Head of caudate nucleus (tissue), 42 donors: ENCODE measurements at regions of chr3 and their contacts with region 1.

Region 1: DNA sequence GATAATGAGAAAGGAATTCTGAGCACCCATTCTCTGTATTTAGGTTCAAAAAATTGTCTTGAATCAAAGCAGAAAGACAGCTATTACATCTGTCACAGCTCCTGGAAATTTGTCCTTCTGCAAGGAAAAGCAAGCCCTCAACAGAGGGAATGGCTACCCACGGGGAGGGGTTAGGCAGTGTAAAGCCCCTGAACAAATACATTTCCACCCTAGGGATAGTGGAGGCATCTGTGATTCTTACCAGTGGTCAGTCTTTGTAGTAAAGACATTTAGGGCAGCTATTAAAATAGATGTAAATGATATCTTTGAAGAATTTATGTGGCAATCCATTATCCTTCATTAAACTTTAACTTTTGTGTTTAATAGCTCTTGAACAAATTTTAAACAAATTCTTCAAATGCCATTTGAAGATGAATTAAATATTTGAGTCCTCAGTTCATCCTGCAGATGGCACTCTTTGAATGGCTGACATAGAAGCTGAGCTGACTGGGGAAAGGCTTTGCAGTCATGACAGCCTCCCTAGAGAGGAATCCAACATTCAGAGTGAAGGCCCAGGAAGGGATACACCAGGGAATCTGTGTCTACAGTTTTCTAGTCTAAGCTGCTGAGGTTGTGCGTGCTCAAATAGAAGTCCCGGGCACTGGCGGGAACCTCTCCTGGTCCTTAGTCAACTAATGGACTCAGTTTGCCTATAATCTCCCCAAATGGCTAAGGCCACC is 359.7 kb upstream of the ROPN1 start:
- DNase-seq: peak in 31 of 42 donors; percentile 8 to 79 (median 51)

Region 2: DNA sequence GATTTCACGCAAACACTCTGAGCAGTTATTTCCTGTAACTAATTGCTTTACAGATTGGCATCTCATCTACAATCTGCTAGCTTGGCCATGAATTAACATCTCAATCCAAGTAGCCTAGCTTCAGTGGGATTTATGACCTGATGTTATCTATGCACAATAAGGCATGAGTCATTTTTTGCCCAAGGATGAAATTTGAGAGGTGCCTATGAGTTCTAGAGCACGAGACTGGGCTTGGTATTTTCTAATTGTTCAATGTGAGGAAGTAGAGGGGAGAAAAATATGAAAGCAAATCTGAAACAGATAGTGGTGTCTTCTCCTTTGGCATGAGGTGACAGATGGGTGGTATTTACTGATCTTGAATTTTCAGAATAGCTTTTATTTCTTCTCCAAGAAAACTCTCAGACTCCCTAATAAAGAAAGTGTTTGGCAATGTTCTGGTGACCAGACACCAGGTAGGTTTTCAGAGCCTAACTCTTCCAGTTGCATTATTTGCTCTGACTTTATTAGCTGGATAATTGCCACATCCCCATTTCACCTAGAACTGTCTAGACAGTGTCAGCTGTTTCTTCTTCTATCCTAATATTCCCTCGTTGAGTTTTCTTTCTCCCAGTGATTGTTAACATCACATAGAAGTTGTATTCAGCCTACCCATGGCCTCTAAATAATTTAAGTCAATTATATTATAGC is 77.7 kb after region 1 on chr3:
- intact Hi-C with region 1: no loop called
- DNase-seq: no peak

Region 3: GRCh38 chr3:124467980-124468902 is 116.7 kb after region 1 on chr3:
- intact Hi-C with region 1: loop called (anchors 5 kb)
- DNase-seq: peak; percentile 23 to 83 (median 58)

Region 4: DNA sequence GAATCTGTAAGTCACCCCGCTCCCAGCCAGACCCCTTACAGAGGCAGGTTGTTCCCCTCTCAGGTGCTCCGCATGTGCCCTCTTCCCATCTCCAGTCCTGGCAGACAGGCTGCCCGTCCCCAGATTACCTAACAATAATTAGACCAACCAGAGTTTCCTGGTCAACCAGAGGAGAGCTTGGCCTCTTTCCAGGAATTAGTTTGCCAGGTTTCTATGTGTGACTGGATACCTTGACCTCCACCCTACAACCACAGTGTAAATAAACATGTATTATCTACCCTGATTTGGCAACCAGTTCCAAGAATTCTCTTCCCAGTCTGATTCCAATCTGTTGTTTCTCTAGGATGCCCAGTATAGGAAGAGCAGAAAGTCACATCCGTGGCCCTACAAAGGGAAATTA is 200.7 kb after region 1 on chr3:
- intact Hi-C with region 1: loop called (anchors 5 kb)
- DNase-seq: no peak